ENCODE measurements at regions of chr16 and their contacts with region 1.

Region 1: DNA sequence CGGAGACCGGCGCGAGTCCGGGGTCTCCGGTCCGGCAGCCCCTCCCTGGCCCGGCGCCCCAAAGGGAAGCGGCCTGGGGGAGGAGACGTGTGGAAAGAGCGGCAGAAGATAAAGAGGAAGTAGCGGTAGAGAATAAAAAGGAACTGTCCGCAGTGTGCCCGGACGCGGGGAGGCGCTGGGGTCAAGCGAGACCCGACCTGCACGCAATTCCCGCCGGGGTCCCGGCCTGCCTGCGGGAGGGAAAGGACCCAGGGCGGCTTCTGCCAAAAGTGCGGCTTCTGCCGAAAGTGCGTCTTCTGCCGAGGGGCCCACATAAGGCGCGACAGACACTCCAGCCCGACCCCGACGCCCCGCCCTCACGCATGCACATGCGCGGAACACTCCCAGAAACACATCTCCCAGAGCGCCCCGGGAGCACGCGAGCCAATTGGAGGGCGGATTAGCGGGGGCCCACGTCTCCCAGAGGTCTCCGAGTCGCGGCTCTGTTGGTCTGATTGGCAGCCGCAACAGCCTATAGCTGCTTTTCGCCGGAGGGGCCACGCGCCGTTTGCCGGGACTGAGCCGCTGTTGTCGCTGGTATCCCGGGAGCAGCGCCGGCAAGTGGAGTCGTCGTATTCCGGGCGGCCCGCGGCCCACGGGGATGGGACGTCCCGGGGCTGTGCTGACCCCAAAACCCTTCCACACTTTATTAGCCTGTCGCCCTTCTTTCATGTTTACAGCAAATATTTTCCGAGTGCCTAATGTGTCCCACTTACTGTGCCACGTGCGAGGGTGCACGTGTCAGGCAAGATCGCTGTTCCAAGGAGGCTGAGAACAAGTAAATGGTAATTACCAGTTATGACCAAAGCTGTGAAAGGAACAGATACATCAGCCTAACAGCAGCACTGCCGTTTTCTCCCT is 8.0 kb upstream of the MEFV start:
- DNase-seq: peak; percentile 95 to 99 (median 97)
- ATAC-seq: peak; percentile 88
- H3K4me3 ChIP-seq: peak overlapping the region; percentile 82 to 91
- H3K4me3 Mint-ChIP-seq: peak overlapping the region; percentile 82
- H3K27ac ChIP-seq: peak overlapping the region; percentile 96 to 98
- H3K27ac Mint-ChIP-seq: peak overlapping the region; percentile 94
- H3K4me1 ChIP-seq: peaks cover 19% of the 10 kb centered on the region
- H3K4me1 Mint-ChIP-seq: peaks cover 43% of the 10 kb centered on the region
- H3K27me3 ChIP-seq: no peaks in the 10 kb centered on the region
- H3K27me3 Mint-ChIP-seq: no peaks in the 10 kb centered on the region
- CTCF ChIP-seq: no peak

Region 2: DNA sequence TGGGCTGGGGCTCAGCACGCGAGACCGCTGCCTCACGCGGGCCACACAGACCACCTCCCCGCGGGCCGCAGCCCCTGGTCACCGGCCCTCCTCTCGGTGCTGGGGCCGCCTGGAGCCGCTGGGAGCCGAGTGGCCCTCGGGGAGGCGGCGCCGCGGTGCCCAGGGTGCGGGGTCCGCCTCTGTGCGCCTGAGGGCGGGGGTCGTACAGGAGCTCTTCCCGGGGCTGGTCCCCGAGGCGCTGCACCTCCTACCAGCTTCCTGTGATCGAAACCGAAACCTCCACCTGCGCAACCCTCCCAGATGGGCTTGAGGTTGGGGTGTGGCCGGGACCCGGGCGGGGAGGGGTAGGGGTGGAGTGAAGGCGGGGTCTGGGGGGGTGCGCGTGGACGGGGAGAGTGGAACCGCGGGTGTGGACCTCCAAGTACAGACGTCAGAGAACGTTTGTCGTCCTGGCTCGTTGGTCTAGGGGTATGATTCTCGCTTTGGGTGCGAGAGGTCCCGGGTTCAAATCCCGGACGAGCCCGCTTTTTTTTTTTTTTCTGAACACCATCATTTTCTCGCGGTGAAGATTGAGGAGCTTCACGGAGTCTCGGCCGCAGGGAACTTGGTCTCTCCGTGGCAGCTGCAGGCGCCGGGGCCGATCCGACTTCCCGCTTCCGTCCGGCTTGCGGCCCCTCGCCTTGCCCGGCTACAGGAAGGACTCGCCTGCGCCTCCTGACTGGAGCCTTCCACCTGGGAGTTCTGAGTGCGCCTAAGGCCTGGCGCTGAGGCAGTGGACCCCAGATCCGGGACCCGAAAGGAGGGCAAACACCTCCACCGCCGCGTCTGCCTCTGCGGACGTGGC is 105.7 kb before region 1 on chr16:
- CTCF ChIA-PET with region 1: no interaction called
- POLR2A ChIA-PET with region 1: interaction called, 7 read pairs
- intact Hi-C with region 1: loop called (anchors 1 to 10 kb)
- DNase-seq: peak; percentile 91 to 98 (median 95)
- ATAC-seq: peak; percentile 91
- H3K4me3 ChIP-seq: peak overlapping the region; percentile 80 to 97
- H3K4me3 Mint-ChIP-seq: peak overlapping the region; percentile 90
- H3K27ac ChIP-seq: peak overlapping the region; percentile 70 to 78
- H3K27ac Mint-ChIP-seq: peak overlapping the region; percentile 94
- H3K4me1 ChIP-seq: peaks cover 23% of the 10 kb centered on the region
- H3K4me1 Mint-ChIP-seq: peaks cover 15% of the 10 kb centered on the region
- H3K27me3 ChIP-seq: no peaks in the 10 kb centered on the region
- H3K27me3 Mint-ChIP-seq: no peaks in the 10 kb centered on the region
- CTCF ChIP-seq: no peak

Region 3: GRCh38 chr16:3214904-3215600 is 49.3 kb before region 1 on chr16:
- CTCF ChIA-PET with region 1: no interaction called
- POLR2A ChIA-PET with region 1: interaction called, 3 read pairs
- intact Hi-C with region 1: loop called (anchors 1 to 2 kb)
- DNase-seq: peak in 8 of 9 experiments; percentile 3 to 86 (median 50)
- ATAC-seq: peak; percentile 86
- H3K4me3 ChIP-seq: peak overlapping the region in 1 of 2 experiments; percentile 40
- H3K4me3 Mint-ChIP-seq: peak overlapping the region; percentile 62
- H3K27ac ChIP-seq: peak overlapping the region; percentile 59 to 83
- H3K27ac Mint-ChIP-seq: peak overlapping the region; percentile 99
- H3K4me1 ChIP-seq: peaks cover 31% of the 10 kb centered on the region
- H3K4me1 Mint-ChIP-seq: peaks cover 39% of the 10 kb centered on the region
- H3K27me3 ChIP-seq: no peaks in the 10 kb centered on the region
- H3K27me3 Mint-ChIP-seq: no peaks in the 10 kb centered on the region
- CTCF ChIP-seq: no peak

Region 4: DNA sequence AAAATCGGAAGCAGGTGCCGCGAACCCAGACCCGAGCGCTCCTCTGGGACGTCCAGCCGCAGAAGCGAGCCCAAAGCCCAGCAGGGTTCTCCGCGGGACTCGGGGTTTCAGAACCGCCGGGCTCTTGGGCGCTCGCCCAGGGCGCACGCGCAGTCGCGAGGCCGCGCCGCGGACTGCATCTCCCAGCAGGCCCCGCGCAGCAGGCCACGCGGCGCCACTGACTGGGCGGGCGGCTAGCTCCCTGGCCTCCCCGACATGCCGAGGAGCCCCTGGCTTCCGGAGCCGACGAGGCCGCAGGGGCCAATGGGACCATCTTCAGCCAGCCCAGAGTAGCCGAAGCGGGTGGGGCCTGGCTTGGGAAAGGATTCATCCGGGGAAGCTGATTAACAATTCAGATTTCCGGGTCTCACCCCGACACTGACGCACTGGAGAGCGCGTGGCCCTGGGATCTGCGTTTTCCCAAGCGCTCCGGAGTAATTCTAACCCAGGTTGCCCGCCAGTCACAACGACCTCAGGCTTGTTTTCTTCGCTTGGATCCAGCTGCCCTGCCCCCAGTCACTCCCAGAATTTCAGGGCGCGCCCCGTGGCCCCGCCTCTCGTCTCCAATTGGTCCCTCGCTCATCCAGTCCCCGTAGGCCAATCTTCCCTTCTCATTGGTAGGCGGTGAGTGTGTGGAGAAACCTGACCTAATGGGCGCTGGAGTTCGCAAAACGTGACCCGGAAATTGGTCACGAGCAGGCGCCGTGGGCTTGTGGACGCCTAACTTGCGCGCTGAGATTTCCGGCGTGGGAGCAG is 18.5 kb after region 1 on chr16 and contains the start of gene ZNF263:
- CTCF ChIA-PET with region 1: interaction called, 12 read pairs
- POLR2A ChIA-PET with region 1: interaction called, 39 read pairs
- intact Hi-C with region 1: loop called (anchors 1 kb)
- DNase-seq: peak; percentile 82 to 98 (median 92)
- ATAC-seq: peak; percentile 88
- H3K4me3 ChIP-seq: peak within 1 kb of the TSS; percentile 84 to 92
- H3K4me3 Mint-ChIP-seq: peak within 1 kb of the TSS; percentile 89
- H3K27ac ChIP-seq: peak within 1 kb of the TSS; percentile 96 to 100
- H3K27ac Mint-ChIP-seq: peak within 1 kb of the TSS; percentile 96
- H3K4me1 ChIP-seq: peaks cover 28% of the 10 kb centered on the region
- H3K4me1 Mint-ChIP-seq: peaks cover 56% of the 10 kb centered on the region
- H3K27me3 ChIP-seq: no peaks in the 10 kb centered on the region
- H3K27me3 Mint-ChIP-seq: no peaks in the 10 kb centered on the region
- CTCF ChIP-seq: no peak
- total RNA-seq, gene ZNF263: 44.2 to 49.0 TPM

Region 5: GRCh38 chr16:3457434-3458252 is 193.3 kb after region 1 on chr16:
- CTCF ChIA-PET with region 1: interaction called, 4 read pairs
- POLR2A ChIA-PET with region 1: interaction called, 3 read pairs
- intact Hi-C with region 1: loop called (anchors 1 kb)
- DNase-seq: peak; percentile 78 to 96 (median 90)
- ATAC-seq: peak; percentile 84
- H3K4me3 ChIP-seq: peak overlapping the region; percentile 71 to 72
- H3K4me3 Mint-ChIP-seq: peak overlapping the region; percentile 85
- H3K27ac ChIP-seq: peak overlapping the region; percentile 76 to 89
- H3K27ac Mint-ChIP-seq: peak overlapping the region; percentile 93
- H3K4me1 ChIP-seq: peaks cover 42% of the 10 kb centered on the region
- H3K4me1 Mint-ChIP-seq: peaks cover 52% of the 10 kb centered on the region
- H3K27me3 ChIP-seq: no peaks in the 10 kb centered on the region
- H3K27me3 Mint-ChIP-seq: no peaks in the 10 kb centered on the region
- CTCF ChIP-seq: peak; percentile 49

Measured in CD8-positive, alpha-beta T cell (primary cell).